ENCODE measurements at regions of chr3 and their contacts with region 1.

Region 1: GRCh38 chr3:134441321-134441720 is 44.5 kb downstream of the ANAPC13 start:
- DNase-seq: no peak

Region 2: DNA sequence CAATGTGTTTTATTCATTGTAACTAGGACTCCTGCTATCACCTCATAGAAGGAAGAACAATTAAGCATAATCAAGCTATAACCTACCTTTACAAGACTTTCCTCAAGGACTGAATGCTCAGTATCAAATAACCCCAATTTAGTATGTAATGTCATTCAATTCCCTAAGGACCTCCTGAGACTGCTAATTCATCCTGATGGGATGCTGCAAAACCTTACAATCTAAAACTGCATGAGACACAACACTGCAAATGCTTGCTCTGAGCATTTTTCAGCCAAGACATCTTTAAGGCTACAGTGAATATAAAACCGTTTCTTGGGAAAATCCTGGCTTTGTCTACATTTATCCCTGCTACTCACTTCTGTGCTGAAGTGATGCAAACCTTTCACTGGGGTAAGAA is 260.6 kb before region 1 on chr3:
- intact Hi-C with region 1: no loop called
- DNase-seq: no peak

Region 3: DNA sequence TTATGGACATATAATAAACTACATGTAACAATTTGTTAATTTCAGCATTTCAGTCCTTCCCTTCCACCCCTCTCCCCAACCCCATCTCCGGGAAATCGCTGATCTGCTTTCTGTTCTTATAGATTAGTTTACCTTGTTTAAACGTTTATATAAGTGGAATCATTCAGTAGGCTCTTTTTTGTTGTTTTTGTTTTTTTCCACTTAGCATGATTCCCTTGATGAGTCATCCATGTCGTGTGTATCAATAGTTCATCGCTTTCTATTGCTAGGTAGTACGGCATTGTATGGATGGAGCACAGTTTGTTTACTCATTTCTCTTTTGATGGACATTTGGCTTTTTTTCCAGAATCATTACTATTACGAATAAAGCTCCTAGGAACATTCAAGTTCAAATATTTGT is 43.6 kb before region 1 on chr3:
- intact Hi-C with region 1: loop called in 1 of 2 experiments (anchors 2 kb)
- DNase-seq: no peak

Measured in posterior vena cava (tissue), 2 donors.